PC-9 (cell line): ENCODE measurements at regions of chr1 and their contacts with region 1.

Region 1: GRCh38 chr1:10779201-10779600 is 17.2 kb downstream of the CASZ1 start:
- DNase-seq: peak; percentile 83 to 86
- H3K4me3 ChIP-seq: peak overlapping the region; percentile 50; the same call in 1 of the 2 replicates
- H3K27ac ChIP-seq: peak overlapping the region; percentile 61
- H3K4me1 ChIP-seq: peaks cover 28% of the 10 kb centered on the region
- H3K27me3 ChIP-seq: no peaks in the 10 kb centered on the region
- CTCF ChIP-seq: no peak

Region 2: GRCh38 chr1:10731041-10731440 is 48.2 kb before region 1 on chr1:
- CTCF ChIA-PET with region 1: no interaction called
- POLR2A ChIA-PET with region 1: interaction called, 7 read pairs
- intact Hi-C with region 1: loop called (anchors 5 kb)
- DNase-seq: peak; percentile 18 to 91
- H3K4me3 ChIP-seq: no peak overlapping the region
- H3K27ac ChIP-seq: peak overlapping the region; percentile 59
- H3K4me1 ChIP-seq: peaks cover 11% of the 10 kb centered on the region; the same call in 1 of the 2 replicates
- H3K27me3 ChIP-seq: no peaks in the 10 kb centered on the region
- CTCF ChIP-seq: no peak